ENCODE measurements at regions of chr3 and their contacts with region 1.

Region 1: DNA sequence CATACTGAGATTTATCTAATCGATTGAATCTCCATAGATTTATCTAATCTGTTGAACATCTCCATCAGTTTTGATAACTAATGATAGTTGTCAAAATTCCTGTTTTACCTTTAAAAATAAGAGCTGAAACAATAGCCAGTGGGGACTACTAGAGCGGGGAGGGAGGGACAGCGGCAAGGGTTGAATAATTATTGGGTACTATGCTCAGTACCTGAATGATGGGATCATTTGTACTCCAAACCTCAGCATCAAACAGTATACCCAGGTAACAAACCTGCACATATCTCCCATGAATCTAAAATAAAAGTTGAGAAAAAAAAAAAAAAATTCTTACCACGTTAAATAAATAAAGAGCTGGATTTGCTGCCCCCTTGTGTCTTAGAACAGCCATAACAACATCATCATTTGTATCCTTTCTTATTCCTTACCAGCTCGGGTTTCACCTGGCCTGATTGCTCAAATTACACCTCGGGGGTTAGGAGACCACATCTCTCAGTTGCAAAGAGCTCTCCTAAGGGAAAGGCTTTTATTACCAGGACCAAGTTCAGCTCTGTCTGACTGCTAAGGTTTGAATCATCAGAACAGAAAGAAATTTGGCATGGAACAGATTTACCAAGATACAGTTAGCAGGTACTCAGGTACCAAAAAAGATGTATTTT is 25.7 kb upstream of the RPL39L start:
- DNase-seq: no peak
- ATAC-seq: peak; percentile 27 to 40

Region 2: DNA sequence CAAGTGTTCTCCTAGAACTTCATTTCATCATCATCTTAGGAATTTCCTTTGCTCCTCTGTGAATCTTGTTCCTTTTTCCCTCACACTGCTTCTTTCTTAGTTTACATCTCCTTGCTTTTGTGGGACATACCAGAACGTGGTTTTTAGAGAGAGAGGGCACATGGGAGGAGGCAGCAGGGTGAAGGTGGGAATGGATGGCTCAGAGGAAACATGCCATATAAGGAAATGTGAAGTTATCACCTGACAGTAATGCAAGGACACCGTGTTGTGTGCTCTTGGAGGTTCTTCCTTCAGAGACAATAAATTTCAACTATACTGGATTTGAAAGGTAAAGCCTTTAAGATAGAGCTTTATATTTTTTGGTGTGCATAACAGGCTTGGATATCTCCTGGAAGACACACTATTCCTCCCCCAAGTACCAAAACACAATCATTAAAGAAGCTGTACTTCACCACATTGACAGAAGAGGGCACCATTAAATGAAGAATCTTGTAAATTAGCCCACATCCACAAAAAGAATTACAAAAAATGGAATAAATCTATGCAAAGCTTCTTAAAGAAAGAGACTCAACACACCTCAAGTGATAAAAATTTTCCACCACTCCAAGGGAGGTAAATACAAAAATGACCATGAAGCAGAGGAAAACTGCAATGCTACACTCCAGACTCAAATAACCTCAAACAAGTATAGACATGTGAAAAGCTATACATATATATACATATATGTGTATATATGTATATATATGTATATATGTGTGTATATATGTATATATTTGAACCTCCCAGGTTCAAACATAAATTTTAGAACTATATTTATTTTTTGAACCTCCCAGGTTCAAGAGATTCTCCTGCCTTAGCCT is 51.9 kb before region 1 on chr3:
- intact Hi-C with region 1: loop called in 1 of 2 experiments (anchors 10 kb)
- DNase-seq: no peak
- ATAC-seq: no peak

Region 3: GRCh38 chr3:187120326-187120725 is 44.7 kb before region 1 on chr3:
- intact Hi-C with region 1: loop called (anchors 5 to 10 kb)
- DNase-seq: no peak
- ATAC-seq: no peak

Region 4: GRCh38 chr3:187227658-187228258 is 62.7 kb after region 1 on chr3:
- intact Hi-C with region 1: no loop called
- DNase-seq: no peak
- ATAC-seq: peak in 1 of 2 donors; percentile 71

Region 5: GRCh38 chr3:188092648-188093047 is 927.6 kb after region 1 on chr3:
- intact Hi-C with region 1: no loop called
- DNase-seq: no peak
- ATAC-seq: no peak

Measured in left cardiac atrium (tissue), 4 donors.